HEK293T (cell line): ENCODE measurements at regions of chr16 and their contacts with region 1.

Region 1: GRCh38 chr16:66476328-66477027 is 49.4 kb downstream of the BEAN1 start:
- DNase-seq: peak; percentile 65

Region 2: DNA sequence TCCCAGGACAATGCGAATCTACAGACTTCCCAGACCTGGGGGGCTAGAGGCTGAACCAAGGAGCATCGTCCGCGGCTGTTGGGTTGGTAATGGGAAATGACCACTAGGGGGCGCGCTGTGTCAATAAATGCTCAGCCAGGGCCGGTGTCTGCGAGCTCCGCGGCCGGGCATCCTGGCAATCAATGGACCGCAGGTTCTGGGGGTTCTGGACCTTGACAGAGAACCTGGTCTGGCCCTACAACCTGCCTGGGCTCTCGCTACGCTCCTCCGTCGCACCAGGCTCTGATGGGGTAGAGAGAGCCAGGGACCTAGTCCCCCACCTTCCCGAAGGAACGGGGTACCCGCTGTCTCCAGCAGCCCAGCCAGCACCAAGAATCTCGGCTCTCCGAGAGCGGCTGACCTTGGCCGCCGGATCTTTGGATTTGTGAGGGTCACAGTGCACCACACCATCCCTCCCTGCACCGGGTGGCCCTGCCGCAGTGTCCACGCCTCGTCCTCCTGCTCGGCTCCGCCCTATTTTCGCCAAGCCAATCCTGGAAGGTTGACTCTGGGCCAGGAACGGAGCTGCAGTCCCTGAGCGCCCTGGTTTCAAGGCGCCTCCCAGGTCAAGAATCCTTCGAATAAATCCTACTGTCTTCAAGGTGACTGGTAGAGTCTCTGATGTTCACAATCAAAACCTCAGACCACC is 69.8 kb before region 1 on chr16:
- CTCF ChIA-PET with region 1: interaction called, 11 read pairs
- POLR2A ChIA-PET with region 1: interaction called, 3 read pairs
- DNase-seq: peak; percentile 89